ENCODE measurements at regions of chr5 and their contacts with region 1.

Region 1: GRCh38 chr5:78294248-78295034 is at the start of gene AP3B1:
- DNase-seq: peak; percentile 97
- H3K4me3 Mint-ChIP-seq: peak within 1 kb of the TSS; percentile 91
- H3K27ac Mint-ChIP-seq: peak within 1 kb of the TSS; percentile 97
- H3K4me1 Mint-ChIP-seq: peaks cover 32% of the 10 kb centered on the region
- H3K27me3 Mint-ChIP-seq: no peaks in the 10 kb centered on the region
- total RNA-seq, gene AP3B1: 29.9 to 33.0 TPM

Region 2: DNA sequence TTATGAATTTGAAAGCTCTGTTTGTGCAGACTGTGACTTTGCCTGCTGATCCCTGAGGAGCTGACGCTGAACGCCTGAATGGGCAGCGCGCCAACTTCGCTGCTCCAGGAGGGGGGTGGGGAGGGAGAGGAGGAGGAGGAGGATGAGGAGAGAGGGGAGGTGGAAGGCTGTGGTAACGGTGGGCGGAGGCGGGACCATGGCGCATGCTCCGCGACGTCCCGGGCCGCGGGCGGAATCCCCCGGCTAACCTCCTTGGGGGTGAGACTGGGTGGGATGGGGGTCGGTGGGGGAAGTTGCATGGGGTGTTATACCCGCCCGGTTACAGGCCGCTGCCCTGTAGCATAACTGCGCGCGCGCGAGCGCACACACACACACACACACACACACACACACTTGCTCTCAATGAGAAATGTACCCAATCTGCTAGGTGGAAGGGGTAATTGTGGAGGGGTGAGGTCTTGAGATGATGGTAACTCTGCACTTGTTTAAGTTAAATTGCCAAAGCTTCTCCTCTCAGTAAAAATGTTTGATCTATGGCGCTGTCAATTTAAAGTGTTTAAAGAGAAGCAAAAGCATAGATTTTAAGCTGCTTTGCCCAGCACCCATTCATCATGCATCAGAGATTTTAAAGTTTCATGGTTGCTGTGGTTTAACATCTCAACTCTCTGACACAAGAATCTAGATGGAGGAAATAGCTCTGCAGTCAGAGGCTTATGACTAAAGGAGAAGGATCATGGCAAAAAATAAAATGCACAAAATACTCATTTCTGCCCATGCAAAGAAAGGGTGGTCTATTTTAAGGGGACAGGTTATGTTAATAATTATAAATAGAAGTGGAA is 441.7 kb before region 1 on chr5:
- CTCF ChIA-PET with region 1: no interaction called
- intact Hi-C with region 1: loop called (anchors 10 kb)
- DNase-seq: peak; percentile 24
- H3K4me3 Mint-ChIP-seq: peak overlapping the region; percentile 75
- H3K27ac Mint-ChIP-seq: no peak overlapping the region
- H3K4me1 Mint-ChIP-seq: peaks cover 17% of the 10 kb centered on the region
- H3K27me3 Mint-ChIP-seq: peaks cover 37% of the 10 kb centered on the region

Region 3: DNA sequence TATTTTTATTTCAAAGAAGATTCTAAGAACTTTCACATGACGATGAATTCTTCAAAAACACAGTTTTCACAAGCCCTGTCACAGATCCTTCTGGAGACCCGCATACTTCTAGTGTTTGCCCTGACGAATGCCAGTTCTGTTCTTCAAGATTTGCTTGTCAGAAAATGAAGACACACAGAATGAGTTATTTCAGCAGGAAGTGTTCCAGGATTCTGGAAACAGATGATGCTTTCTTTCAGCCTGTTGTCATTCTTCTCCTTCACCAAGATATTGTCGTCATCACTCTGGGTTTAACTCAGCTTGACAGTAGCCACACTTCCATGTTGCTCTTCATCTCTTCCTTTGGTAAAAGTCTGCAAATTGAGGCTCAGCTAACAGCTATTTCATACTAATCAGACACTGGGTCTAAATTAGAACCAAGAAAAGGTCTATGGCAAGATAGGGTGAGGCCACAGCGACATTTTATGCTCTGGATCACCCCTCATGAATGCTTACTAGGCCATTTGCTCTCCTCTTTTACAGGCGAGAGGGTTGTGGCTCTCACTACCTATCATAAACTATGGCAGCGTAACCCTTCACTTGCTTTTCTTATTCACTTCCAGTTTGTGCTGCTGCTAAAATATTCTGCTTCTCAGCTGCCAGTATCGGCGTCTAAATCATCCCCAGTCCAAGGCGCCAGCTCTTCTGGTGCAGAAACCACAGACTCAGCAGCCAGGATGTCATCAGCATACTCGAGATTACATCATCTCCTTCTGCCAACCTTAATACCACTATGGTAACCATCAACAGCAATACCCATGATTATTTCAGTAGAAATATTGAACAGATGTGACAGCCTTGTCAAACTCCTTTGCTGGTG is 358.7 kb before region 1 on chr5:
- CTCF ChIA-PET with region 1: no interaction called
- intact Hi-C with region 1: no loop called
- DNase-seq: peak; percentile 60
- H3K4me3 Mint-ChIP-seq: peak overlapping the region; percentile 30
- H3K27ac Mint-ChIP-seq: peak overlapping the region; percentile 80
- H3K4me1 Mint-ChIP-seq: peaks cover 21% of the 10 kb centered on the region
- H3K27me3 Mint-ChIP-seq: peaks cover 3% of the 10 kb centered on the region

Region 4: GRCh38 chr5:78162253-78162862 is 132.1 kb before region 1 on chr5:
- CTCF ChIA-PET with region 1: no interaction called
- intact Hi-C with region 1: no loop called
- DNase-seq: peak; percentile 8
- H3K4me3 Mint-ChIP-seq: no peak overlapping the region
- H3K27ac Mint-ChIP-seq: no peak overlapping the region
- H3K4me1 Mint-ChIP-seq: no peaks in the 10 kb centered on the region
- H3K27me3 Mint-ChIP-seq: no peaks in the 10 kb centered on the region

Region 5: DNA sequence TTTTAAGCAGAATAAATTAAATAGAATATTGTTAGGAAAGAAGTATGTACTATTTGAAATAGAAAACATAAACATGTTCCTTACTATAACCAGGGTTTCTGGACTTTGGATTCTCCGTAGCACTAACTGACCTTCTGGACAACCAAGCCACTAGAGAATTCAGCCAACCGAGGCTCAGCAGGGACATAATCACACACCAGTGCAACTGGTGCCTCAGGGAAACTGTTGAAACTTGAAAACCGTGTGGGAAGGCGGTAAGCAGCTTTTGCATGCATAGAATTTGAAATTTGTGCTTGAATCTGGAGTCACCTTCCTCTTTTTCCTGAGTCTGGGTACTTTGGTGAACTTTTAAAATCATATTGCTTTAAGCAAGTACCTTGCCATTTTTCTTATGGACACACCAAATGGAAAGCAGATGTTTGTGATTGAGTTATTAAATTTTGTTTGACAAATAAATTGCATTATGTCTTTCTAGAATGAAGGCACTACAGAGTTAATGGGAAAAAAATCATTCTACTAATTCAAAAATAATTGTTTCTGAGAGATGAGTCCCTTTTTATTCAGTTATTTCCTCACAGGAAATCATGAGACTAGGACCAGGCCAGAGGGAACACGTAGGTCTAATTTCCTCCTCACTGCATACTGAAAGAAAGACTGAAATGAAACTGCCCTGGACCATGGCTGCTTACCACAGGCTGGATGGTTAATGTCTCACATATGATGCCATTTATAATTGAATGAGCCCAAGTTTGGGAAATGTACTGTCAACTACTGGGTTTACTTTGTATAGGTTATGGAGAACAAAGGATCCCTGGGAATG is 45.4 kb after region 1 on chr5:
- CTCF ChIA-PET with region 1: no interaction called
- intact Hi-C with region 1: no loop called
- DNase-seq: no peak
- H3K4me3 Mint-ChIP-seq: no peak overlapping the region
- H3K27ac Mint-ChIP-seq: no peak overlapping the region
- H3K4me1 Mint-ChIP-seq: no peaks in the 10 kb centered on the region
- H3K27me3 Mint-ChIP-seq: peaks cover 8% of the 10 kb centered on the region

Region 6: GRCh38 chr5:78405829-78406750 is 111.6 kb after region 1 on chr5:
- CTCF ChIA-PET with region 1: no interaction called
- intact Hi-C with region 1: loop called (anchors 1 kb)
- DNase-seq: no peak
- H3K4me3 Mint-ChIP-seq: no peak overlapping the region
- H3K27ac Mint-ChIP-seq: peak overlapping the region; percentile 72
- H3K4me1 Mint-ChIP-seq: peaks cover 50% of the 10 kb centered on the region
- H3K27me3 Mint-ChIP-seq: no peaks in the 10 kb centered on the region

Region 7: DNA sequence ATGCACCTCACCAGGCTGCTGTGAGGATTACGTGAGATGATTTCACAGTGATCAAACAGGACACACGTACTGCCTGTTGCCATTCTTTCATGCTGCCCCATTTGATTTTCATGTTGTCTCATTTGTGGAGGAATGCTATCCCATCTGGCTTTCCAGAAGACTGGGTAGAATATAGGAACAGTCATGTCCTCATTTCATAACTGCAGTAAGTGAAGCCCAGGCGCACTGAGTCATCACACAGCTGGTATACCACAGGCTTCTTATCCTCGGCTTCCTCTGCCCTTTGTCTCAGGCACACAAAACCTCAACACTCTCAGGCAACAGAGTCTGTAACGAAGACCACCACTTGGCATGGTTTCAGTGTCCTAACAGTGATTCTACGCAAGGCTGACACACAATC is 291.8 kb after region 1 on chr5:
- CTCF ChIA-PET with region 1: no interaction called
- intact Hi-C with region 1: no loop called
- DNase-seq: peak; percentile 6
- H3K4me3 Mint-ChIP-seq: no peak overlapping the region
- H3K27ac Mint-ChIP-seq: no peak overlapping the region
- H3K4me1 Mint-ChIP-seq: no peaks in the 10 kb centered on the region
- H3K27me3 Mint-ChIP-seq: peaks cover 8% of the 10 kb centered on the region